ENCODE measurements at regions of chr6 and their contacts with region 1.

Region 1: DNA sequence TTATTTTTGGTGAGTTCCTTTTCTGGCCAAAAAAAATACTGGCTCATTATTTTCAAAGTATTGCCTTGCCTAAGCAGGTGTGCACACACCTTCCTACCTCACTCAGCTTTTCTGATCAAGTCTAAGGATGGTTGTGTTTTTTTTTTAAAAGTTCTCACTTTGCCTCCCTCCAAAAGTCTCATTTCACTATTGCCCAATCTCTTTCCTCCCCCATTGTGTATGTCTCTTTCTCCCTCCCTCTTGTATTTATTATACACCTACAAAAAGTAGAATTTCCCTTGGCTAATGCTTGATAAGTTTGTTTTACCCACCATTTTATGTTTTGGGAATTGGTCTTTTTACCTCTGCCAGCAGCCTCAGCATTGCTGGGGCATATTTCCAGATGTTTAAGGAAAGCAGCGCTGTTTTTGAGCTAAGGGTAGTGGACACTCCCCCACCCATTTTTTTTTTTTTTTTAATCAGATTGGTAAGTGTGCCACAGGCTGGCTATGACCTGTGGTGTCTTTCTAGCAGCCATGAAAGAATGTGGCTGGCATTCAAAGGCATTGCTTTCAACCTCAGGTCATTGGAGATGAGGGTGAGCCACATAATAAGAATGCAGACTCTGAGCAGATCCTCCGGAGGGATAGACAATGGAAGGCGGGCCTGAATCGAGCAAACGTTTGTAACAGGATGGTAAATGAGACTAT is 668.6 kb downstream of the UTRN start:
- DNase-seq: peak; percentile 37
- H3K4me3 ChIP-seq: no peak overlapping the region
- H3K27ac ChIP-seq: peak overlapping the region; percentile 98
- H3K4me1 ChIP-seq: peaks cover 36% of the 10 kb centered on the region
- H3K27me3 ChIP-seq: no peaks in the 10 kb centered on the region
- CTCF ChIP-seq: no peak

Region 2: GRCh38 chr6:145028144-145028818 is 74.6 kb after region 1 on chr6:
- CTCF ChIA-PET with region 1: no interaction called
- POLR2A ChIA-PET with region 1: no interaction called
- intact Hi-C with region 1: loop called (anchors 2 kb)
- DNase-seq: peak; percentile 86
- H3K4me3 ChIP-seq: no peak overlapping the region
- H3K27ac ChIP-seq: peak overlapping the region; percentile 61
- H3K4me1 ChIP-seq: peaks cover 51% of the 10 kb centered on the region
- H3K27me3 ChIP-seq: no peaks in the 10 kb centered on the region
- CTCF ChIP-seq: peak; percentile 80

Region 3: DNA sequence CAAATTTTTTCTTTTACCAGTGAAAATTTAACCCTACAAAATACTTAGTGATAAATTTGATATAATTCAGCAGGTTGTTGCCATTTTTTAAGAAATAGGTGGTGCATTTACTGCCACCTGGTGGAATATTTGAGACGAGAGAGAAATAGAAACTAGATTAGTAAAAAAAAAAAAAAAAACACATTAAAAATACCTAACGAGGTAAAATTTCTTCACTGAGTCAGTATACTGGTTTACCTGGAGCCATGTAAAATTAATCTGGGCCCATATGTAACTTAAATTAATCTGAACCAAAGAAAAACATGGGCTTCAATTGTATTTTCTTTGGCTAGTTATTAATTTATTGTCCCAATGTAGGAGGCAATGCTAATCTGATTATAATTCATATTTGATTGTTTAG is 260.9 kb after region 1 on chr6:
- CTCF ChIA-PET with region 1: no interaction called
- POLR2A ChIA-PET with region 1: no interaction called
- intact Hi-C with region 1: loop called (anchors 5 kb)
- DNase-seq: peak; percentile 72
- H3K4me3 ChIP-seq: no peak overlapping the region
- H3K27ac ChIP-seq: peak overlapping the region; percentile 60
- H3K4me1 ChIP-seq: peaks cover 17% of the 10 kb centered on the region
- H3K27me3 ChIP-seq: no peaks in the 10 kb centered on the region
- CTCF ChIP-seq: peak; percentile 78

Region 4: GRCh38 chr6:145453376-145453775 is 499.7 kb after region 1 on chr6:
- CTCF ChIA-PET with region 1: no interaction called
- POLR2A ChIA-PET with region 1: no interaction called
- intact Hi-C with region 1: loop called (anchors 2 kb)
- DNase-seq: peak; percentile 92
- H3K4me3 ChIP-seq: no peak overlapping the region
- H3K27ac ChIP-seq: peak overlapping the region; percentile 86
- H3K4me1 ChIP-seq: peaks cover 23% of the 10 kb centered on the region
- H3K27me3 ChIP-seq: no peaks in the 10 kb centered on the region
- CTCF ChIP-seq: peak; percentile 52

Region 5: DNA sequence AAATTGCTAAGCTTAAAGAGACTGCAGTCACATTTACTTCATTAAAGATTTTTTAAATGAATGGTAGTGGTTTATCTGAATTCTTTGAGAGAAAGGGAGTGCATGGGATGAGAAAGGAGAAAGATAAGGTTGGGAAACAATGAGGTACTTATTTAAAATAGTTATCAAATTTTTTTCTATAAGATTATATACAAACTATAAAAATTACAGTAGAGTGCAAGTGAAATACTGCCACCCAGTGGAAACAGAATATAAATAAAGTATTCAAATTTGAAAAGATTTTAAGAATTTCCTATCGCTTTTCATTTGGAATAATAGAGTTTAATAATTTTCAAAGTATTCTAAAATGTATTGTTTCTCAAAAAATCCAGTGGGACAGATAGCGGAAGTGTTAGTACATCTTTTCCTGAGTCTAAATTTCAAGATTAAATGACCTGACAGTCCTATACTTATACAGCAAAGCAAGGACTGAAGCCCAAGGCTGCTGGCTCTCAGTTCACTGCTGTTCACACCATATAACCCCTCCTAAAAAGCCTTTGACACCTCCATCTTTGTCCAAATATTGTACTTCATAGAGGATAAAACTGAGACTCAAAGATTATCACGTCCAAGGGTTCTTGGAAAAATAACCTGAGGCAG is 750.6 kb after region 1 on chr6:
- CTCF ChIA-PET with region 1: no interaction called
- POLR2A ChIA-PET with region 1: no interaction called
- intact Hi-C with region 1: loop called (anchors 10 kb)
- DNase-seq: peak; percentile 54
- H3K4me3 ChIP-seq: no peak overlapping the region
- H3K27ac ChIP-seq: no peak overlapping the region
- H3K4me1 ChIP-seq: peaks cover 14% of the 10 kb centered on the region
- H3K27me3 ChIP-seq: no peaks in the 10 kb centered on the region
- CTCF ChIP-seq: peak; percentile 69

Measured in A673 (cell line).